Activated CD4-positive, alpha-beta memory T cell treated with anti-CD3 and anti-CD28 coated beads for 36 hours (primary cell): ENCODE measurements at regions of chr12 and their contacts with region 1.

Region 1: DNA sequence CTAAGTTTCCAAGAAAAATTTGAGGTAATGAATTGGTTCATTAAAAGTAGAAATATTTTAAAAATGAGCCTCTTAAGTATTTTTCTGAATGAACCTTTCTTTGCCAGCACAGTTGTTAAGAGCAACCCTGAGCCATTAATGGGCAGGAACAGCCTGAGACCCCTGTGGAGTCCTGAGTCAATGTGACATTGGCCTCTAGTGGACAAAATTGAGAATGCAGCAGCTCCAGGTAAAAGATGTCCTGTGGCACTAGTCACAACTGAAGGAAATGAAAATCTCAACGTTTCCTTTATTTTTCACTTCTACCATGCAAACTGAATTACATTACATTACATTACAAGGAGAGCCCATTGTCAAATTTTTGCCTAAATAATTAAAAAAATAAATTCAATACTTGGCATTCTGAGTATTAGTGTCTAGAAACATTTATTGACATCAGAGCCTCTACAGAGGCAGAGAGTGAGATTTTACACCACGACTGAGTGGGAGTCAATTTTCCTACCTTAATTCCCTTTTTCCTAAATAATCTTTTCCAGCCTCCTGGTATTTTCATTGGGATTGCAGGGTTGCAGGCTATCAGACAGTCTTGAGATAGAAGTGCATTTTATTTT is 135.7 kb downstream of the PPM1H start:
- DNase-seq: peak; percentile 48
- H3K4me3 Mint-ChIP-seq: no peak overlapping the region
- H3K27ac Mint-ChIP-seq: no peak overlapping the region
- H3K4me1 Mint-ChIP-seq: no peaks in the 10 kb centered on the region
- H3K27me3 Mint-ChIP-seq: peaks cover 4% of the 10 kb centered on the region

Region 2: DNA sequence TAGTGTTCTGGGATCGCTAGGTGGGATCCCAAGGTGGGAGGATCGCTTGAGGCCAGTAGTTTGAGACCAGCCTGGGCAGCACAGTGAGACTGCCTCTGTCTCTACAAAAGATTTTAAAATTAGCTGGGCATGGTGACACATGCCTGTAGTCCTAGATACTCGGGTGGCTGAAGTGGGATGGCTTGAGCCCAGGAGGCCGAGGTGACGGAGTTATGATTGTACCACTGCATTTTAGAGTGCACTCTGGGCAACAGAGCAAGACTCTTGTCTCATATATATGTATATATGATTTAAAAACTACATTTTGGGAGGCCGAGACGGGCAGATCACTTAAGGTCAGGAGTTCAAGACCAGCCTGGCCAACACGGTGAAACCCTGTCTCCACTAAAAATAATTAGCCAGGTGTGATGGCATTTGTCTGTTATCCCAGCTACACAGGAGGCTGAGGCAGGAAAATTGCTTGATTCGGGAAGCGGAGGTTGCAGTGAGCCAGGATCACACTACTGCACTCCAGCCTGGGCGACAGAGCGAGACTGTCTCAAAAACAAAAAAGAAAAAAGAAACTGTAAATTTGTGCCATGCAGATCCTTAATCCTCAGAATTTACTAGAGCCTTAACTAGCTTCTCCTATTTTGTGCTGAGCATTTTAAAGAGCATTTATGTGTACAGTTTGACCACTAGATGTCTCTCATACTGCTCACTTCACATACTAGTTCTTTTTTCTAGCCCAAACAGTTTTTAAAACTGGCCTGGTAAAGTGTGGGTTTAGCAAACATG is 217.8 kb before region 1 on chr12:
- CTCF ChIA-PET with region 1: interaction called, 205 read pairs
- POLR2A ChIA-PET with region 1: no interaction called
- intact Hi-C with region 1: loop called (anchors 1 kb)
- DNase-seq: no peak
- H3K4me3 Mint-ChIP-seq: no peak overlapping the region
- H3K27ac Mint-ChIP-seq: no peak overlapping the region
- H3K4me1 Mint-ChIP-seq: no peaks in the 10 kb centered on the region
- H3K27me3 Mint-ChIP-seq: no peaks in the 10 kb centered on the region

Region 3: GRCh38 chr12:62779488-62779887 is 19.7 kb before region 1 on chr12:
- CTCF ChIA-PET with region 1: interaction called, 24 read pairs
- POLR2A ChIA-PET with region 1: no interaction called
- intact Hi-C with region 1: no loop called
- DNase-seq: no peak
- H3K4me3 Mint-ChIP-seq: no peak overlapping the region
- H3K27ac Mint-ChIP-seq: no peak overlapping the region
- H3K4me1 Mint-ChIP-seq: no peaks in the 10 kb centered on the region
- H3K27me3 Mint-ChIP-seq: peaks cover 2% of the 10 kb centered on the region

Region 4: DNA sequence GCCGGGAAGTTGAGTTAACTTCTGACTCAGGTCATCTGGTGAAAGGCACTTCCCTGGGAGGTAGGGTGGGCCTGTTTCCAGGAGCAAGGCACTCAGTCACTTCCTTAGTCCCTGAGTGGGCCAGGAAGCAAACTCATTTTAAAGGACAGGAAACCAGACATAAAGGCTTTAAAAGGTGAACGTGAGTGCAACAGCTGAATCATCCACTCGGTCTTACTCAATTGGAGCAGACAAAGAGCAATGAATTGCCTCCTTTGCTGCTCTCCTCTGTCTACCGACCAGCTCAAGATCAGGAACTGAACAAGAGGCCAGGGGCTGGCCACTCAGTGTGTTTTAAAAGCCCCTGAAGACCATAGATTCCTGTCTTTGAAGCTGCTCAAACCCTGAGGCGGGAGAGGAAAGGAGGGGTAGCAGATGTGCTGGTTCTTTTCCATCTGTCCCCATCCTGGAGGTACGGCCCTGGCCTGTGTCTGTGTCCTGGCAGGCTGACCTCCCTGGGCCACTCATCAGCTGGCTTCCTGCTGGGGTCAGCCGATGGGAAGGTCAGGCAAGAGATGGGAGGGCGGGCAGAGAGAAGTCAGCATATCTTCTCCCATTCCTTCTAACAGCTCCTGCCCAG is 13.2 kb before region 1 on chr12:
- CTCF ChIA-PET with region 1: interaction called, 24 read pairs
- POLR2A ChIA-PET with region 1: no interaction called
- intact Hi-C with region 1: no loop called
- DNase-seq: peak; percentile 28
- H3K4me3 Mint-ChIP-seq: no peak overlapping the region
- H3K27ac Mint-ChIP-seq: no peak overlapping the region
- H3K4me1 Mint-ChIP-seq: peaks cover 11% of the 10 kb centered on the region
- H3K27me3 Mint-ChIP-seq: peaks cover 2% of the 10 kb centered on the region

Region 5: DNA sequence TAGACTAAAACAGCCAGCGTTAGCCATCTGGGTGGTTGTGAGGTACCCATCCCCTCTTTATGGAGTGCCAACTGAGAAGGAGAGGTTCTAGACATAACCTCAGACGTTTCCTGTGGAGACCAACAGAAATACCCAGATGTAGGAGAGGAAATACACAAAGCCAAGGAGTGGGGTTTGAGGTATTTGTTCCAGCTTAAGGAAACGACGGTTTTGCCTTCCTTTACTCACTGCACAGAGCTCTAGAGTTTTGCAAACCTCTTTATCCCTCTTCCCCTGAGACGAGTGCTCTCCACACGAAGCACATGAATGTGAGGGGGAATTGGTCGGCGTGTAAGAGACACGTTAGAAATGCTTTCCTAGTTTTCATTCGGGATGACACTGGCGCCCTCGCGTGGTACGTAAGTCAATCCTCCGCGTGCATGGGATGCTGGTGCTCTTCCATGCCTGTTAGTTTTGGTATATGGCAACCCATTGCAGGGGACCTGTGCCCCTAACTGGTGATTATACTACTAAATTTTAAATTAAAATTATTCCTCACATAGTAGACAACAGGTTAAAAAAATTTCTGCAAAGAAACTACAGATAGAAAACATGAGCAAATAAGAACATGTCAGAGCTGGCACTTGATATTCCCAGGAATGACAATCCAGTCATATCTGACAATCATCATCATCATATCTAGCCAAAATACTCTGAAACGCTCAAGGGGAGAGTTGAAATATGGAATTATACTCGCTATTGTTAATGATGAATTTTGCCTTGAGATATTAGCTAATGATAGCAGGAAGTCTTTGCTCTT is 14.0 kb after region 1 on chr12:
- CTCF ChIA-PET with region 1: interaction called, 49 read pairs
- POLR2A ChIA-PET with region 1: interaction called, 5 read pairs
- intact Hi-C with region 1: no loop called
- DNase-seq: peak; percentile 53
- H3K4me3 Mint-ChIP-seq: no peak overlapping the region
- H3K27ac Mint-ChIP-seq: no peak overlapping the region
- H3K4me1 Mint-ChIP-seq: peaks cover 11% of the 10 kb centered on the region
- H3K27me3 Mint-ChIP-seq: peaks cover 17% of the 10 kb centered on the region

Region 6: GRCh38 chr12:62924084-62924483 is 124.9 kb after region 1 on chr12:
- CTCF ChIA-PET with region 1: no interaction called
- POLR2A ChIA-PET with region 1: no interaction called
- intact Hi-C with region 1: no loop called
- DNase-seq: no peak
- H3K4me3 Mint-ChIP-seq: no peak overlapping the region
- H3K27ac Mint-ChIP-seq: no peak overlapping the region
- H3K4me1 Mint-ChIP-seq: no peaks in the 10 kb centered on the region
- H3K27me3 Mint-ChIP-seq: peaks cover 7% of the 10 kb centered on the region